Naive thymus-derived CD4-positive, alpha-beta T cell (primary cell): ENCODE measurements at regions of chr1 and their contacts with region 1.

Region 1: GRCh38 chr1:206905280-206906164 is 8.3 kb downstream of the IL24 start:
- DNase-seq: peak in 7 of 9 donors; percentile 38 to 64 (median 59)
- ATAC-seq: peak; percentile 32
- H3K4me3 ChIP-seq: peak overlapping the region; percentile 17
- H3K4me3 Mint-ChIP-seq: peak overlapping the region; percentile 60 to 88 (median 78)
- H3K27ac ChIP-seq: peak overlapping the region; percentile 69
- H3K27ac Mint-ChIP-seq: peak overlapping the region; percentile 79 to 98 (median 93)
- H3K4me1 ChIP-seq: peaks cover 28 to 72% of the 10 kb centered on the region in 2 donors
- H3K4me1 Mint-ChIP-seq: peaks cover 52 to 94% (median 86%) of the 10 kb centered on the region in 7 donors
- H3K27me3 ChIP-seq: no peaks in the 10 kb centered on the region
- H3K27me3 Mint-ChIP-seq: peaks cover 0 to 6% (median 0%) of the 10 kb centered on the region in 5 donors

Region 2: DNA sequence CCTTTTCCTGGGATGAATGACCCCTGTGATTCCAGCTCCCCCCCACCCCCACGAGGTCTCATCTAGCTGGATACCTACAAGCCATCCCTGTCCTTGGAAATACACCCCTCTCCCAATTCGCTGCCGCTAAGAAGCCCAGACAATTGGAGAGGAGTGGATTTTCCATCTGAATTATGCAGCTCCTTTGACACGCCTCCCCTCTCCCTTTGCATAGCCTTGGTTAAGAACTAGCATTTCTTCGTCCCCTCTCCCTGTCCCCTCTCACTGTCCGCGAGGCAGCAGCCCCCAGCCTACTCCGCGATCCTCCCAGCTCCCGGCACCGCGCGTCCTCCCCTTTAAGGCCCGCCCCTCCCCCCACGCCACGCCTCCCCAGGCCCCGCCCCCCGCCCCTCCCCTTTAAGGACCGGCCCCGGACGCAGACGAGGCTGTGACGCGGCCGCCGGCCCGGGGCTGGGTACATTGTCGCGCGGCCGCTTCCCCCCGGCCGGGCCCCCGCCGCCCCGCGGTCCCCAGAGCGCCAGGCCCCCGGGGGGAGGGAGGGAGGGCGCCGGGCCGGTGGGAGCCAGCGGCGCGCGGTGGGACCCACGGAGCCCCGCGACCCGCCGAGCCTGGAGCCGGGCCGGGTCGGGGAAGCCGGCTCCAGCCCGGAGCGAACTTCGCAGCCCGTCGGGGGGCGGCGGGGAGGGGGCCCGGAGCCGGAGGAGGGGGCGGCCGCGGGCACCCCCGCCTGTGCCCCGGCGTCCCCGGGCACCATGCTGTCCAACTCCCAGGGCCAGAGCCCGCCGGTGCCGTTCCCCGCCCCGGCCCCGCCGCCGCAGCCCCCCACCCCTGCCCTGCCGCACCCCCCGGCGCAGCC is 220.8 kb before region 1 on chr1 and contains the start of gene MAPKAPK2:
- CTCF ChIA-PET with region 1: no interaction called
- POLR2A ChIA-PET with region 1: no interaction called
- intact Hi-C with region 1: no loop called
- DNase-seq: peak; percentile 52 to 80 (median 71)
- ATAC-seq: peak; percentile 85
- H3K4me3 ChIP-seq: peak within 1 kb of the TSS; percentile 66
- H3K4me3 Mint-ChIP-seq: peak within 1 kb of the TSS; percentile 92 to 100 (median 96)
- H3K27ac ChIP-seq: peak within 1 kb of the TSS; percentile 90
- H3K27ac Mint-ChIP-seq: peak within 1 kb of the TSS; percentile 90 to 98 (median 95)
- H3K4me1 ChIP-seq: peaks cover 12 to 21% of the 10 kb centered on the region in 2 donors
- H3K4me1 Mint-ChIP-seq: peaks cover 23 to 49% (median 38%) of the 10 kb centered on the region in 7 donors
- H3K27me3 ChIP-seq: no peaks in the 10 kb centered on the region
- H3K27me3 Mint-ChIP-seq: peaks cover 0 to 17% (median 0%) of the 10 kb centered on the region in 5 donors
- total RNA-seq, gene MAPKAPK2: 49.6 to 123 (median 80.5) TPM

Region 3: GRCh38 chr1:206865013-206865671 is 40.4 kb before region 1 on chr1 and contains the start of gene IL20:
- CTCF ChIA-PET with region 1: interaction called, 9 read pairs
- POLR2A ChIA-PET with region 1: interaction called, 42 read pairs
- intact Hi-C with region 1: loop called in 1 of 2 experiments (anchors 1 kb)
- DNase-seq: peak; percentile 71 to 92 (median 84)
- ATAC-seq: peak; percentile 97
- H3K4me3 ChIP-seq: no peak within 1 kb of the TSS
- H3K4me3 Mint-ChIP-seq: peak within 1 kb of the TSS in 2 of 10 donors; percentile 3 to 5
- H3K27ac ChIP-seq: no peak within 1 kb of the TSS
- H3K27ac Mint-ChIP-seq: peak within 1 kb of the TSS in 6 of 9 donors; percentile 7 to 53 (median 28)
- H3K4me1 ChIP-seq: no peaks in the 10 kb centered on the region
- H3K4me1 Mint-ChIP-seq: peaks cover 3 to 16% (median 7%) of the 10 kb centered on the region in 7 donors
- H3K27me3 ChIP-seq: no peaks in the 10 kb centered on the region
- H3K27me3 Mint-ChIP-seq: peaks cover 0 to 56% (median 0%) of the 10 kb centered on the region in 5 donors
- total RNA-seq, gene IL20: not detected

Region 4: DNA sequence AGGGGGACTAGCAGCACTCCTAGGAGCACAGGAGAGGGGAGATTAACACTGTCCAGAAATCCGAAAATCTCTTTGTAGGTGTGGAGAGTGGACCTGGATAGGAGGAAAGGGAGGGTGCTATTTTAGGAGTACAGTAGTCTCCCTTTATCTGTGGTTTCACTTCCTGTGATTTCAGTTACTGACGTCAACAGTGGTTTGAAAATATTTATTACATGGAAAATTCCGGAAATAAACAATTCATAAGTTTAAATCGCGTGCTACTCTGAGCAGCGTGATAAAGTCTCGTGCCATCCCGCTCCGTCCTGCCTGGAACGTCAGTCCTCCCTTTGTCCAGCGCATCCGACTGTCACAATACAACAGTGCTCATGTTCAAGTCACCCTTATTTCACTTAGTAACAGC is 14.8 kb before region 1 on chr1:
- CTCF ChIA-PET with region 1: interaction called, 3 read pairs
- POLR2A ChIA-PET with region 1: interaction called, 96 read pairs
- intact Hi-C with region 1: loop called (anchors 2 kb)
- DNase-seq: peak in 3 of 9 donors; percentile 36 to 46 (median 45)
- ATAC-seq: peak; percentile 71
- H3K4me3 ChIP-seq: no peak overlapping the region
- H3K4me3 Mint-ChIP-seq: peak overlapping the region; percentile 37 to 78 (median 66)
- H3K27ac ChIP-seq: no peak overlapping the region
- H3K27ac Mint-ChIP-seq: peak overlapping the region; percentile 11 to 96 (median 81)
- H3K4me1 ChIP-seq: peaks cover 6 to 19% of the 10 kb centered on the region in 2 donors
- H3K4me1 Mint-ChIP-seq: peaks cover 21 to 65% (median 49%) of the 10 kb centered on the region in 7 donors
- H3K27me3 ChIP-seq: no peaks in the 10 kb centered on the region
- H3K27me3 Mint-ChIP-seq: peaks cover 0 to 4% (median 0%) of the 10 kb centered on the region in 5 donors

Region 5: GRCh38 chr1:207672522-207673130 is 767.1 kb after region 1 on chr1:
- CTCF ChIA-PET with region 1: no interaction called
- POLR2A ChIA-PET with region 1: no interaction called
- intact Hi-C with region 1: no loop called
- DNase-seq: peak in 1 of 9 donors; percentile 11
- ATAC-seq: no peak
- H3K4me3 ChIP-seq: no peak overlapping the region
- H3K4me3 Mint-ChIP-seq: no peak overlapping the region
- H3K27ac ChIP-seq: no peak overlapping the region
- H3K27ac Mint-ChIP-seq: no peak overlapping the region
- H3K4me1 ChIP-seq: no peaks in the 10 kb centered on the region
- H3K4me1 Mint-ChIP-seq: peaks cover 0 to 4% (median 0%) of the 10 kb centered on the region in 7 donors
- H3K27me3 ChIP-seq: peaks cover 3 to 5% of the 10 kb centered on the region in 2 donors
- H3K27me3 Mint-ChIP-seq: peaks cover 44 to 65% (median 54%) of the 10 kb centered on the region in 5 donors